ENCODE measurements at regions of chr6 and their contacts with region 1.

Region 1: DNA sequence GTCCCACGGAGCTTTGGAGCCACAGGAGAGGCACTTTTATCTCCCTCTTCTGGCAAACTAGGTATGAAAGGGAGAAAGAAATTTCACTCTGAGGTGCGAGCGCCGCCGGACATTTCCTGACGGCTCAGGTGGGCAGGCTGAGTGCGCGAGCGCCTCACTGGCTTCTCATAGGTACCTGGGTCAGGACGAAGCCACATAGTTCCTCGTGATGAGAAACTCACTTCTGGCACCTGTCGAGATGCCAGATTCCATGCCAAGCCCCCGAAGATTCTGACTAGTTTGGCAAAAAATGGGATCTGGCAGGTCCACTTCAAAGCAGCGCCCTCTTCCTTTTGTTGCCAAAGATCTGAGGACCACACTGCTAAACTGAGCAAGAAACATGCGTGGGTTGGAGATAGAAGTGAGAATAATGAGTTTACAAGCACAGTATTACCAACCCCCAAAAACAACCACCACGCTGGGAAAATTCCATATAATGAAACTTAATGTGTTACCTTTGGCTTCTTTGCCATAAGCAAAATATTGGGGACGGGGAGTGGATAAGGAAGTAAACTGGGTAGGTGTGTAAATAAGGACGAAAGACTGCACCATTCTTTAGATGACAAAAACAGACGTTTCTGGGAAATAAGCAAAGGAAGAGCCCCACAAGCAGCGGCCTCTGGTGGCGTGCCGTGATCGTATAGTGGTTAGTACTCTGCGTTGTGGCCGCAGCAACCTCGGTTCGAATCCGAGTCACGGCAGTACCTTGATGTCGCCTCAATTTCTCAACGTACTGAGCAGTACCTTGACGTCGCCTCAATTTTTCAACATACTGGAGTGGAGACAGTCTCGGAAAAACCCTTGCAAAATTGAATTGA is 89.8 kb upstream of the PRSS16 start:
- DNase-seq: peak; percentile 94
- H3K4me3 Mint-ChIP-seq: peak overlapping the region; percentile 76
- H3K27ac Mint-ChIP-seq: peak overlapping the region; percentile 83
- H3K4me1 Mint-ChIP-seq: peaks cover 43% of the 10 kb centered on the region
- H3K27me3 Mint-ChIP-seq: no peaks in the 10 kb centered on the region

Region 2: GRCh38 chr6:26607434-26608230 is 550.1 kb before region 1 on chr6:
- CTCF ChIA-PET with region 1: no interaction called
- intact Hi-C with region 1: loop called (anchors 1 kb)
- DNase-seq: peak; percentile 79
- H3K4me3 Mint-ChIP-seq: peak overlapping the region; percentile 52
- H3K27ac Mint-ChIP-seq: no peak overlapping the region
- H3K4me1 Mint-ChIP-seq: peaks cover 15% of the 10 kb centered on the region
- H3K27me3 Mint-ChIP-seq: peaks cover 1% of the 10 kb centered on the region

Region 3: GRCh38 chr6:27078734-27079357 is 78.8 kb before region 1 on chr6:
- CTCF ChIA-PET with region 1: no interaction called
- intact Hi-C with region 1: no loop called
- DNase-seq: peak; percentile 64
- H3K4me3 Mint-ChIP-seq: peak overlapping the region; percentile 67
- H3K27ac Mint-ChIP-seq: no peak overlapping the region
- H3K4me1 Mint-ChIP-seq: peaks cover 2% of the 10 kb centered on the region
- H3K27me3 Mint-ChIP-seq: peaks cover 26% of the 10 kb centered on the region

Region 4: GRCh38 chr6:27146706-27147505 is 10.8 kb before region 1 on chr6:
- CTCF ChIA-PET with region 1: interaction called, 5 read pairs
- intact Hi-C with region 1: loop called (anchors 1 kb)
- DNase-seq: peak; percentile 87
- H3K4me3 Mint-ChIP-seq: no peak overlapping the region
- H3K27ac Mint-ChIP-seq: no peak overlapping the region
- H3K4me1 Mint-ChIP-seq: peaks cover 11% of the 10 kb centered on the region
- H3K27me3 Mint-ChIP-seq: no peaks in the 10 kb centered on the region

Region 5: GRCh38 chr6:27251606-27252251 is 94.0 kb after region 1 on chr6:
- CTCF ChIA-PET with region 1: no interaction called
- intact Hi-C with region 1: loop called (anchors 1 kb)
- DNase-seq: peak; percentile 86
- H3K4me3 Mint-ChIP-seq: peak overlapping the region; percentile 89
- H3K27ac Mint-ChIP-seq: no peak overlapping the region
- H3K4me1 Mint-ChIP-seq: peaks cover 9% of the 10 kb centered on the region
- H3K27me3 Mint-ChIP-seq: peaks cover 63% of the 10 kb centered on the region

Region 6: DNA sequence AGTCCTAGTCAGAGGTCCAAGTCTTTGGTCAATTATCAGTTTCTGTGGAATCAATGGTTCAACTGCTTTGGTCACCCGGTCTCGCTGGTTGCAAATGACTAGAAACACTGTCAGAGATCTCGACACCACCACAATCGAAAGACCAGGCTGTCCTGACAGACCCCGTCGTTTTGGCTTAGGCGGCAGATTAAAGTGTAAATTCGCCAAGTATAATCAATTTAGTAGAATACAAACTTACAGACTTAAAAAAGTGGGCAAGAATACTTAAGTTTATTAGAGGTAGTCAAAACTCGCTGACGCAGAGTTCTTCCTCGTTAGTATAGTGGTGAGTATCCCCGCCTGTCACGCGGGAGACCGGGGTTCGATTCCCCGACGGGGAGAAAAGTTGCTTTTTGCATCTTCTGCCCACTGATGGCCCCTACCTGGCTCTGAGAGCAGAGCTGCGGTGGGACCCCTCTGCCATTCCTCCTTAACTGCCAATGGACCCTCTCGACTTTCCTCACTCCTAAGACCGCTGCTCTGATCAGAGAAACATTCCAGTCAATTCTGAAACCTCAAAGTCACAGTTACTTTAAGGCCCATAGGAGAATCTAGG is 345.8 kb after region 1 on chr6:
- CTCF ChIA-PET with region 1: no interaction called
- intact Hi-C with region 1: loop called (anchors 5 kb)
- DNase-seq: peak; percentile 88
- H3K4me3 Mint-ChIP-seq: peak overlapping the region; percentile 90
- H3K27ac Mint-ChIP-seq: peak overlapping the region; percentile 86
- H3K4me1 Mint-ChIP-seq: peaks cover 24% of the 10 kb centered on the region
- H3K27me3 Mint-ChIP-seq: peaks cover 1% of the 10 kb centered on the region

Measured in activated naive CD4-positive, alpha-beta T cell treated with anti-CD3 and anti-CD28 coated beads for 36 hours (primary cell).